ENCODE measurements at regions of chr6 and their contacts with region 1.

Region 1: GRCh38 chr6:156869980-156870398 is 92.8 kb downstream of the ARID1B start:
- DNase-seq: no peak
- H3K4me3 ChIP-seq: no peak overlapping the region
- H3K27ac ChIP-seq: no peak overlapping the region
- H3K4me1 ChIP-seq: peaks cover 19% of the 10 kb centered on the region
- CTCF ChIP-seq: no peak

Region 2: DNA sequence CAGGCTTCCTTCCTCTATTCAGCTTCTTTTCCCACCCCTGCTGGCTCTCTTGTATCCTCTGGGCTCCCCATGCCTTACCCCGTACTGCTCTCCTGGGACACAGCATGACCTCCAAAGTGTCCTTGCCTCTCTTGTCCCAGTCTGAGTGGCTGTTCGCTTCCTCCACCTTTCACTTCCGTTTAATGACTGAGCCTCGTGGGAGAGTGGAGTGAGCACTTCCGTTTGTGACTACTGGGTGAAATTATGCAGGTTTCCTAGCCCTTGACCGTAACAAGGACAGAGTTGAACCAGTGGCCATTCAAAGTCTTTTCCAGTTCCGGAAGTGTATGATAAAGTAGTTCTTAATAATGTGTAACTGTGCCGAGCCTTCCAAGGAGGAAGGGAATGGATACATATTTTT is 16.4 kb after region 1 on chr6:
- CTCF ChIA-PET with region 1: no interaction called
- POLR2A ChIA-PET with region 1: interaction called, 10 read pairs
- intact Hi-C with region 1: no loop called
- DNase-seq: peak; percentile 60
- H3K4me3 ChIP-seq: peak overlapping the region; percentile 32
- H3K27ac ChIP-seq: no peak overlapping the region
- H3K4me1 ChIP-seq: peaks cover 54% of the 10 kb centered on the region
- CTCF ChIP-seq: no peak

Measured in OCI-LY7 (cell line).